Naive thymus-derived CD8-positive, alpha-beta T cell (primary cell): ENCODE measurements at regions of chr12 and their contacts with region 1.

Region 1: GRCh38 chr12:6632026-6632983 is 3.5 kb downstream of the LPAR5 start:
- DNase-seq: peak in 9 of 10 donors; percentile 43 to 77 (median 58)
- ATAC-seq: peak; percentile 65 to 72
- H3K4me3 Mint-ChIP-seq: peak overlapping the region; percentile 85 to 95 (median 90)
- H3K27ac Mint-ChIP-seq: peak overlapping the region; percentile 93 to 100 (median 98)
- H3K4me1 Mint-ChIP-seq: peaks cover 33 to 84% (median 73%) of the 10 kb centered on the region in 4 donors
- H3K27me3 Mint-ChIP-seq: no peaks in the 10 kb centered on the region

Region 2: DNA sequence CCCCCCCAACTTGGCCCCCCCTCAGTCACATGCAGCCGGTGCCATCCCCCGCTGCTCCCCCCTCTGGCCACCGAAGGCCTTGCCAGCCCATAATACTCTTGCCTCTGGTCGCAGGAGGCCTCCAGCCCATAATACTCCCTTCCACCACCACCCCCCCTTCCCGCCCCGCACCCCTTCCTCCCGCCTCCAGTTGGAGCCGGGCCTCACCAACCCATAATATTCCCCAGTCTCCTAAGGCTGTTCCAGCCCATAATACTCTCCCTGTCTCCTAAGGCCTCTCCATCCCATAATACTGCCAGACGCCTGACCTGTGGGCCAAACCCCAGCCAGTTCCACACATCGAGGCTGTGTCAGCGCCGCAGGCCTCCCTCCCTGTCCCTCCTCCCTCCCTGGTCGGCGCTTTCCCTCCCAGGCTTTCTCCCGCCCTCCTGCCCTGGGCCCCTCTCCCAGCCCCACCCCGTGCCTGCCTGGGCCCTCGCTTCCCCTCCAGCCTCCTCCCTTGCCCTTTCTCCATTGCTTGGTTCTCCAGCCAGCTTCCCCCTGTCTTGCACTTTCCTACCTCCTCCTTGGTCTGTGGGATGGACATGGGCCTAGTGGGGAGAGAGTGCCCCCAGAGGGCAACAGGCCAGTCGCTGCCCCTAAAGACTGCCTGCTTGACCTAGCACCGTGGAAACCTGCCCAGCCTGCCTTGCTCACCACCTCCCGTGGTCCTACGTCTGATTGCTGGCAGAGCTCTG is 18.4 kb before region 1 on chr12:
- POLR2A ChIA-PET with region 1: interaction called, 38 read pairs
- DNase-seq: peak in 8 of 10 donors; percentile 33 to 81 (median 51)
- ATAC-seq: peak; percentile 24 to 45
- H3K4me3 Mint-ChIP-seq: peak overlapping the region in 8 of 10 donors; percentile 9 to 81 (median 63)
- H3K27ac Mint-ChIP-seq: peak overlapping the region; percentile 54 to 97 (median 88)
- H3K4me1 Mint-ChIP-seq: peaks cover 36 to 65% (median 61%) of the 10 kb centered on the region in 4 donors
- H3K27me3 Mint-ChIP-seq: no peaks in the 10 kb centered on the region

Region 3: DNA sequence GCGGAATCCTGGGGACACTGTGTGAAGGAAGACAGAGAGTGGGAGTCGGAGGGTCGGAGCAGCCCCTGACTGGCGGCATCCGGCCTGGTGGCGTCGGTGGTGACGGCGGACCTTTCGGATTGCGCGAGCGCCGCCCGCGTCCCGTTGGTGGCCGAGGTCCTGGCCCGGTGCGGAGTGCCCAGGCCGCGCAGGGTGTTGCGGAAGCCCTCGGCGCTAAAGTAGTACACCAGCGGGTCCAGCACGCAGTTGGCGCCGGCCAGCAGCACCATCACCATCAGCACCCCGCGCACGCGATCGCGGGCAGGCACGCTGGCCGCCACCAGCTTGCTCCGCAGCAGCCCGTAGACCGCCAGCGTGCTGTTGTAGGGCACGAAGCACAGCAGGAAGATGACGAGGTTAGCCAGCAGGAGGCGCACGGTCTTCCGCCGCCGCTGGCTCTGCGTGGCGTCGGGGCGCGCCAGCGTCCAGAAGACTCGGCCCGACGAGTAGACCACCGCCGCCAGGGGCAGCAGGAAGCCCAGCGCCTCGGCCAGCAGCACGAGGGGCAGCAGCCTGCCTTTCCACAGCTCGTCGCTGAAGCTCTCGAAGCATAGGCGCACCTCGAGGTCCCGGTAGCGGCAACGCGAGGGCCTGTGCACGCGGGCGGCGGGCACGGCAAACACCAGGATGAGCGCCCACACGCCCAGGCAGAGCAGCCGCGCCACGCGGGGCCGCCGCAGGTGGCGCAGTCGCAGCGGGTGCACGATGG is 12.0 kb before region 1 on chr12:
- POLR2A ChIA-PET with region 1: interaction called, 38 read pairs
- DNase-seq: peak in 9 of 10 donors; percentile 22 to 76 (median 57)
- ATAC-seq: peak; percentile 72 to 80
- H3K4me3 Mint-ChIP-seq: peak overlapping the region in 9 of 10 donors; percentile 33 to 76 (median 53)
- H3K27ac Mint-ChIP-seq: peak overlapping the region in 9 of 10 donors; percentile 37 to 94 (median 89)
- H3K4me1 Mint-ChIP-seq: peaks cover 22 to 54% (median 43%) of the 10 kb centered on the region in 4 donors
- H3K27me3 Mint-ChIP-seq: no peaks in the 10 kb centered on the region

Region 4: GRCh38 chr12:6647083-6647604 is 14.8 kb after region 1 on chr12 and contains the start of gene ACRBP:
- POLR2A ChIA-PET with region 1: interaction called, 30 read pairs
- DNase-seq: peak in 5 of 10 donors; percentile 20 to 51 (median 25)
- ATAC-seq: peak; percentile 70 to 91
- H3K4me3 Mint-ChIP-seq: peak within 1 kb of the TSS; percentile 69 to 86 (median 78)
- H3K27ac Mint-ChIP-seq: peak within 1 kb of the TSS in 7 of 10 donors; percentile 25 to 87 (median 63)
- H3K4me1 Mint-ChIP-seq: peaks cover 13 to 38% (median 25%) of the 10 kb centered on the region in 4 donors
- H3K27me3 Mint-ChIP-seq: no peaks in the 10 kb centered on the region
- polyA plus RNA-seq, gene ACRBP: 0.43 to 0.50 TPM in 2 of 3 donors, not detected in the other

Region 5: DNA sequence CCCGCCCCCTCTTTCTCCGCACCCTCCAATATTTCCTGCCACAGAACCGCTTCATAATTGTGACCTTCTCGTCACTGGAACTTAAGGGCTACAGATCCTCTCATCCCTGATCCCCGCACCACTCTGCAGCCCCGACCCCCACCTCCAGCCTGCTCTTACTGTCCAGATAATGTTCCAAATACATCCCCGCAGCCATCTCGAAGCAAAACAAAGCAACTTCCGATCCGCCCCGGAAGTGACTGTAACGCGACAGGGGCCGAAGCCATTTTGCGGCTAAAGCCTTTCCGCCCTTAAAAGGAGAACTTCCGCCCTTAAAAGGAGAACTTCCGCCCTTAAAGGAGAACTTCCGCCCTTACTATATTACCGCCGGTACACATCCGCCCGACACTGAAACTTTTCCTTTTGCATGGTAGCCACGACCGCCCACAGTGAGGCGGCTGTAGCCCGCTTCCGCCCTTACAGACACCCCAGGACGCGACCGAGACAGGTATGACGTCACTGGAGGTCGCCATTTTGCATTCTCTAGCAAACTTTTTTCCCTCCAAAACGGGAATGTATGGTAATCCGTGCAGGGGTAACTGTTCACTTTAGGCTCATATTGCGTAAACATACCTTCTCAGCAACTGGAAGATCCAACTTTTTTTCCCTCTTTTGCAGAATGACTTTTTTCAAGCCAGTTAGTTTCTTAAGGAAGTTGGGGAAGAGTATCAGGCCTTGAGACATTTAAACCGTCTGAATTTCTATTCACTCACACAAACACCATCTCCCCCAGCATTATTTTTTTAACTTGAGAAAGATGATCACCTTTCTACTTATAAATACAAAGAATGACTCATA is 30.8 kb after region 1 on chr12 and contains the start of gene ING4:
- POLR2A ChIA-PET with region 1: interaction called, 20 read pairs
- DNase-seq: peak; percentile 83 to 99 (median 97)
- ATAC-seq: peak; percentile 98 to 99
- H3K4me3 Mint-ChIP-seq: peak within 1 kb of the TSS; percentile 89 to 100 (median 93)
- H3K27ac Mint-ChIP-seq: peak within 1 kb of the TSS; percentile 91 to 100 (median 97)
- H3K4me1 Mint-ChIP-seq: peaks cover 18 to 42% (median 35%) of the 10 kb centered on the region in 4 donors
- H3K27me3 Mint-ChIP-seq: no peaks in the 10 kb centered on the region
- polyA plus RNA-seq, gene ING4: 89.5 to 99.6 (median 90.6) TPM

Region 6: GRCh38 chr12:6818222-6818621 is 185.9 kb after region 1 on chr12:
- POLR2A ChIA-PET with region 1: no interaction called
- DNase-seq: no peak
- ATAC-seq: no peak
- H3K4me3 Mint-ChIP-seq: no peak overlapping the region
- H3K27ac Mint-ChIP-seq: no peak overlapping the region
- H3K4me1 Mint-ChIP-seq: peaks cover 12 to 24% (median 13%) of the 10 kb centered on the region in 4 donors
- H3K27me3 Mint-ChIP-seq: peaks cover 1 to 27% (median 17%) of the 10 kb centered on the region in 5 donors